Activated CD8-positive, alpha-beta memory T cell treated with anti-CD3 and anti-CD28 coated beads, Interleukin-2, amount 10 ng/mL, durations not matched to agents 7 days and 5 days (primary cell): ENCODE measurements at regions of chr3 and their contacts with region 1.

Region 1: DNA sequence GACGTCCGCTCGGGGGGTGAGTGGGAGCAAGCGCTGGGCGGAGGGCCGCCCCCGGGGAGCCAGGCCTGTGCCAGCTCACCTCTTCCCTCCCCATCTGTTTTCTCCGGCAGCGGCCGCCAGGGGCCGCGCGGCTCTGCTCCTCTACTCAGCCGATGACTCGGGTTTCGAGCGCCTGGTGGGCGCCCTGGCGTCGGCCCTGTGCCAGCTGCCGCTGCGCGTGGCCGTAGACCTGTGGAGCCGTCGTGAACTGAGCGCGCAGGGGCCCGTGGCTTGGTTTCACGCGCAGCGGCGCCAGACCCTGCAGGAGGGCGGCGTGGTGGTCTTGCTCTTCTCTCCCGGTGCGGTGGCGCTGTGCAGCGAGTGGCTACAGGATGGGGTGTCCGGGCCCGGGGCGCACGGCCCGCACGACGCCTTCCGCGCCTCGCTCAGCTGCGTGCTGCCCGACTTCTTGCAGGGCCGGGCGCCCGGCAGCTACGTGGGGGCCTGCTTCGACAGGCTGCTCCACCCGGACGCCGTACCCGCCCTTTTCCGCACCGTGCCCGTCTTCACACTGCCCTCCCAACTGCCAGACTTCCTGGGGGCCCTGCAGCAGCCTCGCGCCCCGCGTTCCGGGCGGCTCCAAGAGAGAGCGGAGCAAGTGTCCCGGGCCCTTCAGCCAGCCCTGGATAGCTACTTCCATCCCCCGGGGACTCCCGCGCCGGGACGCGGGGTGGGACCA is 632 bp upstream of the CRELD1 start:
- DNase-seq: peak; percentile 93
- ATAC-seq: peak; percentile 81
- H3K4me3 Mint-ChIP-seq: peak overlapping the region; percentile 84
- H3K27ac Mint-ChIP-seq: peak overlapping the region; percentile 93
- H3K4me1 Mint-ChIP-seq: peaks cover 32% of the 10 kb centered on the region
- H3K27me3 Mint-ChIP-seq: no peaks in the 10 kb centered on the region

Region 2: GRCh38 chr3:9826815-9827567 is 106.0 kb before region 1 on chr3:
- CTCF ChIA-PET with region 1: interaction called, 16 read pairs
- DNase-seq: peak; percentile 51
- ATAC-seq: peak; percentile 84
- H3K4me3 Mint-ChIP-seq: no peak overlapping the region
- H3K27ac Mint-ChIP-seq: peak overlapping the region; percentile 43
- H3K4me1 Mint-ChIP-seq: peaks cover 5% of the 10 kb centered on the region
- H3K27me3 Mint-ChIP-seq: no peaks in the 10 kb centered on the region

Region 3: DNA sequence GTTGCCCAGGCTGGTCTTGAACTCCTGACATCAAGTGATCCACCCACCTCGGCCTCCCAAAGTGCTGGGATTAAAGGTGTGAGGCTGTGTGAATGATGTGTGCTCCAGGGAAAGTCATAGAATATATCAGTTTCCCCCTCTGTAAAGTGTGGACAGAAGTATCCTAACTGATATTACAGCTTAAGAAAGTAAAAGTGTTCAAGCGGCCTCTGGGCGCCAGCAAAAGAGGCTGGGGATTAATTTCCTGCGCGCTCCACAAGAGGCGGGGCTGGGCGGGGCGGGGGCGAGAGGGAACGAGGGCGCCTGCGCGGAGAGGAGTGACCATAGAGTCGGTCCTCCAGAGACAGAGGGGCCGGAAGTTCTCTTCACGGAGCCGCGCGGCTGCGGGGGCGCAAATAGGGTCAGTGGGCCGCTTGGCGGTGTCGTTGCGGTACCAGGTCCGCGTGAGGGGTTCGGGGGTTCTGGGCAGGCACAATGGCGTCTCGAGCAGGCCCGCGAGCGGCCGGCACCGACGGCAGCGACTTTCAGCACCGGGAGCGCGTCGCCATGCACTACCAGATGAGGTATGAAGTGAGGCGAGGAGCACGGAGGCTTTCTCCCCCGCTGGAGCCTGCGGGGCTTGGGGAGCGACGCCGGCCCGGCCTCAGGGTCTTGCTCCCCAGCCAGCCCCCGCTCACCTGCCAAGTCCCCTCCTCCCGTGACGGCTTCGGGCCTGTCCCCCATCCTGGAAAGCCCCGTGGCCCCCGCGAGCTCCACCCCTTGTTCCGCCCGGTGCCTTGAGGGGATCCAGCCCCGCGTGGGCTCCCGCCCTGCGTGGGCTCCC is 42.5 kb before region 1 on chr3 and contains the start of gene JAGN1:
- CTCF ChIA-PET with region 1: interaction called, 22 read pairs
- DNase-seq: peak; percentile 94
- ATAC-seq: peak; percentile 92
- H3K4me3 Mint-ChIP-seq: peak within 1 kb of the TSS; percentile 97
- H3K27ac Mint-ChIP-seq: peak within 1 kb of the TSS; percentile 97
- H3K4me1 Mint-ChIP-seq: peaks cover 38% of the 10 kb centered on the region
- H3K27me3 Mint-ChIP-seq: no peaks in the 10 kb centered on the region
- total RNA-seq, gene JAGN1: 27.9 to 44.0 TPM

Region 4: DNA sequence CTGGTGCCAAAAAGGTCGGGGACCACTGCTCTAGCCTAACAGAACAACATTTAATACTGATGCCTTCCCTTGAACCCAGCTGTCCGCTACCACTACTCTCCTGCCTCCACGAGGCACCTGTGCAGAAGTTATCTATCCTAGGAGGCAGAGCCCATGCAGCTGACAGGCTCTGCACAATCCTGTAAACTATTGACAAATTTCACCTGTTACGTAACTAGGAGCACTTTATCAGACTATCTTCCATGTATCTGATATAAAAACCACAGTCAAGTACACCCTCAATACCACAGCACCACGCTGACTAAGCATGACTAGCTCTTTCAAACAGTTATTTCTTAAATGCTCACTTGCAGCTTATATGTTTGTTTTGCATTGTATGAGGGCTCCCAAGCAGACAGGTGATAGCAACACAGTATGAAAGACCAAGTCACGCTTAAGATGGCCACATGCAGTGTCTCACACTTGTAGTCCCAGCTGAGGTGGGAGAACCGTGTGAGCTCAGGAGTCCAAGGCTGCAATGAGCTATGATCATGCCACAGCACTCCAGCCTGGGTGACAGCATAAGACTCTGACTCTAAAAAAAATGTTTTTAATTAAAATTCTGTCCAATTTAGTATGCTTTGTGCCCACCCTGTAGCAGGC is 20.6 kb before region 1 on chr3:
- CTCF ChIA-PET with region 1: interaction called, 18 read pairs
- DNase-seq: no peak
- ATAC-seq: peak; percentile 18
- H3K4me3 Mint-ChIP-seq: no peak overlapping the region
- H3K27ac Mint-ChIP-seq: no peak overlapping the region
- H3K4me1 Mint-ChIP-seq: peaks cover 25% of the 10 kb centered on the region
- H3K27me3 Mint-ChIP-seq: peaks cover 16% of the 10 kb centered on the region

Region 5: GRCh38 chr3:9986237-9986725 is 53.3 kb after region 1 on chr3:
- CTCF ChIA-PET with region 1: interaction called, 26 read pairs
- DNase-seq: no peak
- ATAC-seq: peak; percentile 61
- H3K4me3 Mint-ChIP-seq: peak overlapping the region; percentile 91
- H3K27ac Mint-ChIP-seq: peak overlapping the region; percentile 94
- H3K4me1 Mint-ChIP-seq: peaks cover 43% of the 10 kb centered on the region
- H3K27me3 Mint-ChIP-seq: no peaks in the 10 kb centered on the region

Region 6: DNA sequence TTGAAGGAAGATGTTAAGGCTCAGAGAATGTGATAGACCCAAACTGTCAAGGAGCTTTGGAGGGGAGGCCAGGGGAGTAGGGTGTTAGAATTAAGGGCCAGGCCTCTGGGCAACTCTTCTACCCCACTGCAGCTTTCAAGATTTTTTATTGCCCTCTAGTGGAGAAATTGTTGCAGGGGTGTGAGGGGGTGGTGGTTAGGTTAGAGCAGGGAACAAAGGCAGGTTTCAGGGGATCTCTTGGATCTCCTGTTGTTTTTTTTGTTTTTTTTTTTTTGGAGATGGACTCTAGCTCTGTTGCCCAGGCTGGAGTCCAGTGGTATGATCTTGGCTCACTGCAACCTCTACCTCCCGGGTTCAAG is 389.3 kb after region 1 on chr3:
- CTCF ChIA-PET with region 1: interaction called, 30 read pairs
- DNase-seq: no peak
- ATAC-seq: no peak
- H3K4me3 Mint-ChIP-seq: no peak overlapping the region
- H3K27ac Mint-ChIP-seq: no peak overlapping the region
- H3K4me1 Mint-ChIP-seq: peaks cover 24% of the 10 kb centered on the region
- H3K27me3 Mint-ChIP-seq: peaks cover 17% of the 10 kb centered on the region